Astrocyte of the cerebellum (primary cell): ENCODE measurements at regions of chr11 and their contacts with region 1.

Region 1: GRCh38 chr11:64516226-64516625 is 74.8 kb upstream of the SLC22A12 start:
- DNase-seq: no peak
- H3K4me3 ChIP-seq: no peak overlapping the region
- CTCF ChIP-seq: no peak

Region 2: GRCh38 chr11:64458997-64459396 is 57.2 kb before region 1 on chr11:
- in situ Hi-C with region 1: loop called (anchors 5 kb)
- DNase-seq: no peak
- H3K4me3 ChIP-seq: no peak overlapping the region
- CTCF ChIP-seq: no peak

Region 3: DNA sequence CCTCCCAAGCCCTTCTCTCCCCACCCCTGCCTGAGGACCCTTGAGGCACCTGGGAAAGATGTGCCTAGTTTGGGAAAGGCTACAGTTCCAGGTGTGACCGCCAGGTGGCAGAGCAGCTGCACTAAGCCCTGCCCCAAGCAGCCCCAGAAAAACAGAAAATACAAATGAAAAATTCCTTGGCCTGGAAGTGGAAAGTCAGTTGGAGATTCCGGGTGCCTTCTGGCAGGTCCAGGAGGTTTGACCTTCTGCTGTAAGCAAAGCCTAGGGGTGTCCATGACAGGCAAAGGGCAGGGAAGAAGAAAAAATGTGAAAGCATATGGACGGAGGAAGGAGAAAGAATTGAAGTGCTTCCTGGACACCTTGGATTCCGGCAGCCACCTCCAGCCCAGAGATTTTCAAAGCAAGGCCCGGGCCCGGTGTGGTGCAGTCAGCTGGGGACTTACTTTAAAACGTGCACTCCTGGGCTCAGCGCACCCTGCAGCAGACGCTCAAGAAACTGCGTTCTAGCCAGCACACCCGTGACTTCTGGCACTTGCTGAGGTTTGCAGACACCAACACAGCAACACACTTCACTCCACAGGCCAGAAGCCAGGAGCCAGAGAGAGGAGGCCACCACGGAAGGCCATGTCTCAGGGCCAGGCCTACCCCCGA is 37.5 kb after region 1 on chr11:
- in situ Hi-C with region 1: no loop called
- DNase-seq: no peak
- H3K4me3 ChIP-seq: no peak overlapping the region
- CTCF ChIP-seq: peak; percentile 98

Region 4: GRCh38 chr11:64583296-64584232 is 67.3 kb after region 1 on chr11:
- in situ Hi-C with region 1: no loop called
- DNase-seq: no peak
- H3K4me3 ChIP-seq: no peak overlapping the region
- CTCF ChIP-seq: no peak